GM12878 (cell line): ENCODE measurements at regions of chr11 and their contacts with region 1.

Region 1: DNA sequence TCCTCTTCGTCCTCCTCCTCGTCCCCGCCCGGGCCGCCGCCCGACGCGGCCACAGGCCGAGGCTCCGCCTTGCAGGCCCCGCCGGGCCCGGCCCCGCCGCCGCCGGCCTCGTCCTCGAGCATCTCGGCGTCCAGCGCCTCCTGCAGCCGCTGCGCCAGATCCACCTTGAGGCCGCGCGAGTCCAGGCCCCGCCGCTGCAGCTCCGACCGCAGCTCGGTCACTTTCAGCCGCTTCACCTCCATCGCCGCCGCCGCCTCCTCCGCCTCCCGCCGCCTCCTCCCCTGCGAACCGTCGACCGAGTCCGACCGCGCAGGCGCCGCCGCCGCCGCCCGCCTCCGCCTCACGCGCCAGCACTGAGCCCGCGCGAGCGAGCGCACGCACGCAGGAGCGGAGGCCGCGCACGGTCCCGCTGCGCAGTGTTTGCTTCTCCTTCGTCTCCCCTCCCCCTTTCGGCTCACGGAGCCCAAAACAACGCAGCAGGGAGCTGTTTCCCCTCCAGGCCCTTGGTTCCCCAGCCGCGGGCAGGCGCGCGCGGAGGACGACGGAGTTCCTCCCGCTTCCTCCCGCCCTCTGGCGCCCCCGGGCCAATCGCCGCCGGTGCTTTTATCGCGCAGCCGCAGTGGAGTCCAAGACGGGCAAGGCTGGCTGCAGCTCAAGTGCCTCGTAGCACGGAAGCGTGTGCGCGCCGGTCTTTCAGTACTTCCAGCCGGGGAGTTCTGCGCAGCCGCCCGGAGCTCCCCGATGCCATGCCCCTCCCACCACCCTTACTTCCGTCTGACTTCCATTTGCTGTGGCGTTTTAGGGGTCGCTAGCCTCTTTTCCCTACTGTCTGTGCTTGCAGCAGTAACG is at the start of gene HNRNPUL2:
- DNase-seq: peak; percentile 95
- ATAC-seq: peak; percentile 90
- H3K4me3 ChIP-seq: peak within 1 kb of the TSS; percentile 100
- H3K27ac ChIP-seq: peak within 1 kb of the TSS; percentile 94
- H3K4me1 ChIP-seq: no peaks in the 10 kb centered on the region; the same call in 1 of the 2 replicates
- H3K27me3 ChIP-seq: no peaks in the 10 kb centered on the region
- CTCF ChIP-seq: no peak
- EP300 ChIP-seq: no peak
- POLR2A ChIP-seq: peak; percentile 96
- RAD21 ChIP-seq: no peak
- polyA plus RNA-seq, gene HNRNPUL2: 1.6 to 7.4 TPM

Region 2: GRCh38 chr11:62665075-62665598 is 62.0 kb before region 1 on chr11 and contains the starts of genes C11orf98 and CSKMT:
- CTCF ChIA-PET with region 1: interaction called, 4 read pairs
- POLR2A ChIA-PET with region 1: interaction called, 29 read pairs
- RAD21 ChIA-PET with region 1: interaction called, 4 read pairs
- SMC1A ChIA-PET with region 1: interaction called, 6 read pairs
- in situ Hi-C with region 1: no loop called
- intact Hi-C with region 1: no loop called
- DNase-seq: no peak
- ATAC-seq: peak; percentile 91
- H3K4me3 ChIP-seq: peak within 1 kb of the TSS; percentile 95
- H3K27ac ChIP-seq: peak within 1 kb of the TSS; percentile 95
- H3K4me1 ChIP-seq: peaks cover 13% of the 10 kb centered on the region
- H3K27me3 ChIP-seq: no peaks in the 10 kb centered on the region
- CTCF ChIP-seq: no peak
- EP300 ChIP-seq: no peak
- POLR2A ChIP-seq: peak; percentile 96
- RAD21 ChIP-seq: no peak
- polyA plus RNA-seq, gene C11orf98: 134 to 199 TPM
- polyA plus RNA-seq, gene CSKMT: 17.0 to 20.4 TPM

Region 3: GRCh38 chr11:62705880-62706849 is 21.0 kb before region 1 on chr11:
- CTCF ChIA-PET with region 1: interaction called, 6 read pairs
- POLR2A ChIA-PET with region 1: interaction called, 79 read pairs
- RAD21 ChIA-PET with region 1: interaction called, 6 read pairs
- SMC1A ChIA-PET with region 1: interaction called, 26 read pairs
- in situ Hi-C with region 1: no loop called
- intact Hi-C with region 1: loop called (anchors 1 kb)
- DNase-seq: peak; percentile 50
- ATAC-seq: peak; percentile 81
- H3K4me3 ChIP-seq: peak overlapping the region; percentile 79
- H3K27ac ChIP-seq: peak overlapping the region; percentile 51
- H3K4me1 ChIP-seq: peaks cover 29% of the 10 kb centered on the region
- H3K27me3 ChIP-seq: no peaks in the 10 kb centered on the region
- CTCF ChIP-seq: no peak
- EP300 ChIP-seq: no peak
- POLR2A ChIP-seq: peak; percentile 78
- RAD21 ChIP-seq: no peak

Region 4: GRCh38 chr11:62753736-62754603 is 26.8 kb after region 1 on chr11 and contains the start of gene ZBTB3:
- CTCF ChIA-PET with region 1: interaction called, 11 read pairs
- POLR2A ChIA-PET with region 1: interaction called, 70 read pairs
- RAD21 ChIA-PET with region 1: interaction called, 44 read pairs
- SMC1A ChIA-PET with region 1: interaction called, 27 read pairs
- in situ Hi-C with region 1: no loop called
- intact Hi-C with region 1: loop called (anchors 1 kb)
- DNase-seq: peak; percentile 99
- ATAC-seq: peak; percentile 99
- H3K4me3 ChIP-seq: peak within 1 kb of the TSS; percentile 85
- H3K27ac ChIP-seq: peak within 1 kb of the TSS; percentile 92
- H3K4me1 ChIP-seq: peaks cover 6% of the 10 kb centered on the region
- H3K27me3 ChIP-seq: no peaks in the 10 kb centered on the region
- CTCF ChIP-seq: no peak
- EP300 ChIP-seq: no peak
- POLR2A ChIP-seq: peak; percentile 85
- RAD21 ChIP-seq: no peak
- polyA plus RNA-seq, gene ZBTB3: 1.4 to 1.9 TPM

Region 5: DNA sequence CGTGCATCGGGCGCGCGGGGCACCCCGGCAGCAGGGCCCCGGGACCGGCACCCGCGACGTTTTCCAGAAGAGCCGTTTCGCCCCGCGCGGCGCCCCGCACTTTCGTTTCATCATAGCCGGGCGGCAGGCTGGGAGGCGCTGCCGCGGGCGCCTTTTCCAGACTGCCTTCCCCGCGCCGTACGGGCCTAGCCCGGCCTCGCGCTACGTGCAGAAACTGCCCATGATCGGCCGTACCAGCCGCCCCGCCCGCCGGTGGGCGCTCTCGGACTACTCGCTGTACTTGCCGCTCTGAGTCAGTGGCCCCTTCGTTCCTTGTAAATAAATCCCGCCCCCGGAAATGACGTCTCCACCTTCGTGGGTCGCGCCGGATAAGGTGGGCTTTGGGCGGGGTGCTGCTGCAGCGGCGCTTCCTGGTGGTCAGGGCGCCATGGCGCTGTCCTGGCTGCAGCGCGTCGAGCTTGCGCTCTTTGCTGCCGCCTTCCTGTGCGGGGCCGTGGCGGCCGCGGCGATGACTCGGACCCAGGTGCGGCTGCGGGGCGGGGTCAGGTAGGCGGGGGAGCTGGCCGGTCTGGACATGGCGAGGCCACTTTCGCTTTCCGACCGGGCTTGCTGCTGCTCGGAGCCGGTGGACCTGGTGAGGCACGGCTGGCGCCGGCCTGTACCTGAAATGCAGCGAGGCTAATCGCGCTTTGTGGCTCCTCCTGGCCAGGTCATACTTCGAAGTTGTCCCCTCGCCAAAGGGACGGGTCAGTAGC is 60.0 kb after region 1 on chr11 and contains the start of gene TMEM179B:
- CTCF ChIA-PET with region 1: interaction called, 22 read pairs
- POLR2A ChIA-PET with region 1: interaction called, 22 read pairs
- RAD21 ChIA-PET with region 1: interaction called, 5 read pairs
- SMC1A ChIA-PET with region 1: interaction called, 3 read pairs
- in situ Hi-C with region 1: no loop called
- intact Hi-C with region 1: no loop called
- DNase-seq: peak; percentile 88
- ATAC-seq: peak; percentile 80
- H3K4me3 ChIP-seq: peak within 1 kb of the TSS; percentile 95
- H3K27ac ChIP-seq: peak within 1 kb of the TSS; percentile 64
- H3K4me1 ChIP-seq: peaks cover 7% of the 10 kb centered on the region
- H3K27me3 ChIP-seq: no peaks in the 10 kb centered on the region
- CTCF ChIP-seq: peak; percentile 65 to 75 (median 74)
- EP300 ChIP-seq: no peak
- POLR2A ChIP-seq: peak; percentile 99
- RAD21 ChIP-seq: peak; percentile 58
- polyA plus RNA-seq, gene TMEM179B: 57.8 to 62.8 TPM

Region 6: DNA sequence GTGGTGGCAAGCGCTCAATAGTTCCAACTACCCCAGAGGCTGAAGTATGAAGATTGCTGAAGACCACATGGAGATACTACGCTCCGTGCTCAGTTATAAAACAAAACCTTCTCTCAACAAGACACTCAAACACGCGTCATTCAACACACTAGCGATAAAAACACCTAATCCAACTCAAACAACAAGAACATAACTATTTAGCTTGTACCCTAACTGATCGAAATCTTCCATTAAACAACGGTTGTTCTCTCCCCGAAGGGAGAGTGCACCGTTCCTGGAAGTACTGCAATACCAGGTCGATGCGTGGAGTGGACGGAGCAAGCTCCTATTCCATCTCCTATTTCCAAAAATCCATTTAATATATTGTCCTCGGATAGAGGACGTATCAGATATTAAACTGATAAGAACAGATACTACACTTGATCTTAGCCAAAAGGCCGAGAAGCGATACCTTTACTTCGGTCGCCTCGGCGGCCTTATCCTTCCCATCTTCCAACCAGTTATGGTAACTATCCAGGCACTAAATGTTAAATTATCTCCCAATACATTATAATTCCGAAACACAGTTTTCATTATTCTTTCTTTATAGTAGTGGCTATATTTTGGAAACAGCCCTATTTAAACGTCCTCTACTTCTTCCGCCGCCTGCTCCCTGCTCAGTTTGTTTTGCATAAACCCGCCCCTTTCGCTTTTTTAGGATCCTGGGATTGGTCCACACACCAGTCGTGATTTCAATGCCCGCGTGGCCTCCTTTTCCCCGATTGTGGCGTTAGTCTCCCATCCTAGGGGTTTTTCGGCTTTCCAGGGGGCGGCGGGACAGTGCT is 114.4 kb after region 1 on chr11:
- CTCF ChIA-PET with region 1: no interaction called
- POLR2A ChIA-PET with region 1: interaction called, 13 read pairs
- RAD21 ChIA-PET with region 1: interaction called, 5 read pairs
- SMC1A ChIA-PET with region 1: no interaction called
- in situ Hi-C with region 1: no loop called
- intact Hi-C with region 1: loop called (anchors 1 kb)
- DNase-seq: peak; percentile 100
- ATAC-seq: peak; percentile 83
- H3K4me3 ChIP-seq: peak overlapping the region; percentile 68; the same call in 1 of the 2 replicates
- H3K27ac ChIP-seq: peak overlapping the region; percentile 99
- H3K4me1 ChIP-seq: peaks cover 7% of the 10 kb centered on the region
- H3K27me3 ChIP-seq: no peaks in the 10 kb centered on the region
- CTCF ChIP-seq: peak in 1 of 3 experiments; percentile 21; a peak in 1 of 6 replicates
- EP300 ChIP-seq: peak in 1 of 2 experiments; percentile 72; a peak in 1 of 4 replicates
- POLR2A ChIP-seq: peak; percentile 92
- RAD21 ChIP-seq: no peak

Region 7: GRCh38 chr11:62880803-62881578 is 153.9 kb after region 1 on chr11 and contains the start of gene SLC3A2:
- CTCF ChIA-PET with region 1: interaction called, 4 read pairs
- POLR2A ChIA-PET with region 1: interaction called, 10 read pairs
- RAD21 ChIA-PET with region 1: interaction called, 3 read pairs
- SMC1A ChIA-PET with region 1: interaction called, 4 read pairs
- in situ Hi-C with region 1: no loop called
- intact Hi-C with region 1: no loop called
- DNase-seq: peak; percentile 47
- ATAC-seq: peak; percentile 92
- H3K4me3 ChIP-seq: peak within 1 kb of the TSS; percentile 91
- H3K27ac ChIP-seq: peak within 1 kb of the TSS; percentile 95
- H3K4me1 ChIP-seq: peaks cover 15% of the 10 kb centered on the region
- H3K27me3 ChIP-seq: no peaks in the 10 kb centered on the region
- CTCF ChIP-seq: peak; percentile 64 to 86 (median 83)
- EP300 ChIP-seq: peak in 1 of 2 experiments; percentile 17; a peak in 1 of 4 replicates
- POLR2A ChIP-seq: peak; percentile 94
- RAD21 ChIP-seq: peak; percentile 58
- polyA plus RNA-seq, gene SLC3A2: 6.9 to 17.0 TPM